CD4-positive, alpha-beta T cell (primary cell): ENCODE measurements at regions of chr1 and their contacts with region 1.

Region 1: DNA sequence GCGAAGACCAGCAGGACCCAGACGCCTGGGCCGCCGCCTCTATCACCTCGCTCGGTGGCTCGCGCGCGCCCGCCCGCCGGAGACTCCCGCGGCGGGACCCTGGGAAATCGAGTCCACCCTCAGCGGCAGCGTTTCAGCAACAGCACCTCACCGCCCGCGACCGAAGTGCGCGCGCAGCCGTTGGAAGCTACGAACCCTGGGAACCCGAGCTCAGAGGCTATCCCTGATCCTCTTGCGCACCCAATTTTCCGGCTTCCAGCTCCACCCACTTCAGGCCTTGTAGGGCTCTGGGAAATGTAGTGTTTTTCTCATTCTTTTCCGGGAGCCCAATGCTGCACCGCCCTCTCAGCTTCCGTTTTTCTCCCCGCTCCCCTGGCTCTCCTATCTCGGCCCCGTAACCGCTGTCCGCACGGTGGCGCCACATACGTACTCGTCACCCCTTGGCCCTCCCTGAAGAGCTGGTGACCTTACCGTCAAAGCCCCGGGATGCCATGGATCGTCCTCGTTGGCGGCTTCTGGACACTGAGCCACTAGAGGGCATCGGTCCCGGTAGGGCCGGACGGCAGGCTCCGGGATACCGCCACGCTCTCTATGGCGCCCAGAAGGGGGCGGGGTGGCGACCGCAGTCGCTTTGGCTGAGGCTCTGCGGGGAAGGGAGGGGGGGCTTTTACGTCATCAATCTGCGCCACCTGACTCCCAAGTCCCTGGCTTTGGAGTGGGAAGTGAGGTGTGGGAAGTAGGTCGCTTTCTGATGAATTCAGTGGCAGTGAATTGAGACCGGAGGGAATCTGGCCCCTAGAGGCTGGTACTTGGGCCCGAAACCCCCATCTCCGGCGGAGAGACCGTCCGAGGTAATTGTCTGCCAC is at the starts of genes ODR4 and TPR:
- DNase-seq: peak; percentile 89 to 99 (median 94)
- ATAC-seq: peak; percentile 87
- H3K4me3 ChIP-seq: peak within 1 kb of the TSS; percentile 79
- H3K4me3 Mint-ChIP-seq: peak within 1 kb of the TSS; percentile 92
- H3K27ac ChIP-seq: peak within 1 kb of the TSS; percentile 89 to 96
- H3K27ac Mint-ChIP-seq: peak within 1 kb of the TSS; percentile 93
- H3K4me1 ChIP-seq: peaks cover 16% of the 10 kb centered on the region
- H3K4me1 Mint-ChIP-seq: peaks cover 77% of the 10 kb centered on the region
- H3K27me3 ChIP-seq: no peaks in the 10 kb centered on the region
- H3K27me3 Mint-ChIP-seq: no peaks in the 10 kb centered on the region
- CTCF ChIP-seq: peak; percentile 85
- total RNA-seq, gene ODR4: 21.3 to 24.5 TPM
- total RNA-seq, gene TPR: 82.3 to 91.3 TPM

Region 2: DNA sequence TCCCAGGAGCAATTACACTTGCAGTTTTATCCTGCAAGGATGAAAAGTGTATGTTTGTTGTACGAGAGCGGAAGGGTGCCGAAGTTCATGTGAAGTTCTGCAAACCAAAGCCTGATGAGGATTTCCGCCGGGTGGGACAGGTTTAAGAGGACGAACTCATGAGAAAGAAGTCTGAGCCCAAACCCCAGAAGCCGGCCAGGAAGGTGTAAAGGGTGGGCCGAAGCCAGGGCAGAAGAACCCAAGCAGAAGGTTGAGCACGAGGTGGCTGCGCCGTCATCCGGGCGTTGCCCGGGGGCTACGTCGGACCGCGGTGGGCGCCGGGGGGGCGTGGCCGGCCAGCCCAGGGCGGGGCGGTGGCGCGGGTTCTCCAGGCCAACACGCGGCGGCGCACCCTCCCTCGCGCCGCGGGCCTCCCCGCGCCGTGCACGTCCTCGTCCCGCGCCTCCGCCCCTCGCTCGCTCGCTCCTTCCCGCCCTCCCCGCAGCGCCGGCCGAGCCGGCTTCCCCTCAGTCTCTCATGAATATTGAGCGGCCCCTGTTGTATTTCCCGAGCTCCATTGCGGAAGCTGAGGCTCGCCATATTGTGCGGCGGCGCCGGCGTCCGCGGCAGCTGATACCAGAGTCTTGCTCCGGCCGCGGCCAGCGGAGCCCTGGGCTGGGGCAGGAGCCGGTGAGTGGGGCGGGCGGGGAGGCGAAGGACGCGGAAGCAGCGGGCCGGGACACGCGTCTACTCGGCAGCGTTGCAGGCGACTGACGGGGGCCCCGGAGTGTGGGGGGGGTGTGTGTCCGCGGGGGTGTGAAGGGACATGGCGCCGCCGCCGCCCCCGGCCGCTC is 1330.1 kb before region 1 on chr1 and contains the start of gene RNF2:
- CTCF ChIA-PET with region 1: no interaction called
- POLR2A ChIA-PET with region 1: no interaction called
- intact Hi-C with region 1: loop called in 1 of 2 experiments (anchors 5 kb)
- DNase-seq: peak; percentile 62 to 94 (median 76)
- ATAC-seq: peak; percentile 90
- H3K4me3 ChIP-seq: peak within 1 kb of the TSS; percentile 80
- H3K4me3 Mint-ChIP-seq: peak within 1 kb of the TSS; percentile 94
- H3K27ac ChIP-seq: peak within 1 kb of the TSS; percentile 70 to 72
- H3K27ac Mint-ChIP-seq: peak within 1 kb of the TSS; percentile 77
- H3K4me1 ChIP-seq: peaks cover 13% of the 10 kb centered on the region
- H3K4me1 Mint-ChIP-seq: peaks cover 59% of the 10 kb centered on the region
- H3K27me3 ChIP-seq: no peaks in the 10 kb centered on the region
- H3K27me3 Mint-ChIP-seq: no peaks in the 10 kb centered on the region
- CTCF ChIP-seq: peak; percentile 15
- total RNA-seq, gene RNF2: 7.4 to 9.0 TPM

Region 3: GRCh38 chr1:186175588-186175987 is 199.7 kb before region 1 on chr1:
- CTCF ChIA-PET with region 1: no interaction called
- POLR2A ChIA-PET with region 1: no interaction called
- intact Hi-C with region 1: no loop called
- DNase-seq: no peak
- ATAC-seq: no peak
- H3K4me3 ChIP-seq: no peak overlapping the region
- H3K4me3 Mint-ChIP-seq: no peak overlapping the region
- H3K27ac ChIP-seq: no peak overlapping the region
- H3K27ac Mint-ChIP-seq: no peak overlapping the region
- H3K4me1 ChIP-seq: no peaks in the 10 kb centered on the region
- H3K4me1 Mint-ChIP-seq: no peaks in the 10 kb centered on the region
- H3K27me3 ChIP-seq: no peaks in the 10 kb centered on the region
- H3K27me3 Mint-ChIP-seq: peaks cover 31% of the 10 kb centered on the region
- CTCF ChIP-seq: no peak

Region 4: DNA sequence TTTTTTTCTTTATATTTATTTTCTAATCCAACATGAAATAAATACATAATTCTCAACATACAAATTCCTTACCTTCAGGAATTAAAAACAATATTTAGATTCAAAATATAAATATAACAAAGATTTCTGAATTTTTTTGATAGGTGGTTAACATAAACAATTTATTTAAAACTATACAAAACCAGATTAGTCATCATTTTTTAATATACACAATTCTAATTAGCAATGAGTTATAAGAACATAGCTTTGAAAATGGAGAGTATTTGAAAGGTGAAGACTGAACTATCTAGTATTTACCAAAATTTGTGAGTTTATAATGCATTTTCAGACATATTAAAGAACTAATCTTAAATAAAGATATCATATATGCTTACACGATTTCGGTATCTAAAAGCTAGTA is 37.8 kb before region 1 on chr1:
- CTCF ChIA-PET with region 1: interaction called, 5 read pairs
- POLR2A ChIA-PET with region 1: interaction called, 4 read pairs
- intact Hi-C with region 1: loop called in 1 of 2 experiments (anchors 5 kb)
- DNase-seq: no peak
- ATAC-seq: no peak
- H3K4me3 ChIP-seq: no peak overlapping the region
- H3K4me3 Mint-ChIP-seq: no peak overlapping the region
- H3K27ac ChIP-seq: no peak overlapping the region
- H3K27ac Mint-ChIP-seq: no peak overlapping the region
- H3K4me1 ChIP-seq: no peaks in the 10 kb centered on the region
- H3K4me1 Mint-ChIP-seq: no peaks in the 10 kb centered on the region
- H3K27me3 ChIP-seq: no peaks in the 10 kb centered on the region
- H3K27me3 Mint-ChIP-seq: no peaks in the 10 kb centered on the region
- CTCF ChIP-seq: no peak

Region 5: GRCh38 chr1:186618401-186619170 is 243.3 kb after region 1 on chr1:
- CTCF ChIA-PET with region 1: no interaction called
- POLR2A ChIA-PET with region 1: no interaction called
- intact Hi-C with region 1: no loop called
- DNase-seq: peak in 13 of 14 experiments; percentile 2 to 75 (median 15)
- ATAC-seq: peak; percentile 77
- H3K4me3 ChIP-seq: peak overlapping the region; percentile 42
- H3K4me3 Mint-ChIP-seq: peak overlapping the region; percentile 74
- H3K27ac ChIP-seq: no peak overlapping the region
- H3K27ac Mint-ChIP-seq: peak overlapping the region; percentile 47
- H3K4me1 ChIP-seq: peaks cover 23% of the 10 kb centered on the region
- H3K4me1 Mint-ChIP-seq: peaks cover 54% of the 10 kb centered on the region
- H3K27me3 ChIP-seq: no peaks in the 10 kb centered on the region
- H3K27me3 Mint-ChIP-seq: no peaks in the 10 kb centered on the region
- CTCF ChIP-seq: no peak